ENCODE measurements at regions of chr5 and their contacts with region 1.

Region 1: DNA sequence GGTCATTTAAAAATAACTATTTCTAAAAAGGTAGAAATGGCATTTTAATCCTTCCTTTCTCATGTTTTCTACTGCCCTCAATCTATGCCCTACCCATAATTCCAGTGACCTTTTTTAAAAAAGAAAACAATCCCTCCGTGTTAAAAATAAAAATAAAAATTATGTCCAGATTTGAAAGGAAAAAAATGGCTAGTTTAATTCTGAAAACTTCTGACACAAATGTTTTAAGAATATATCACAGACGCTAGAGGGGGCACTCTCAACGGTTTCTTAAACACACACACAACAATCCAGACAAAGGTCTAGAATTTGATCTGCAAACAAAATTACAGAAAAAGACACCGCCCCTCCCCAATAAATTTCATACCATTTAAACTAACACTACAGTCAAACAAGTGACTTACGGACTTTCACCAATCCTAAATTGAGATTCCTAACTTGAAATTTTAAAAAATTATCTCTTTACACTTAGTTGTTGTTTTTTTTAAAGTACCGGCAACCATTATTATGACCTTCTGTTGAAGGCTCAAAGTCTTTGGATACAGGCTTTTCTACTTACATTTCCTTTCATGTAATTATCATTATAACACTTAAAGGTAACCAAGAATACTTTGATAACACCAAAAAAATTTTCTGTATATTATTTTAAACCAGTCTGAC is 38.2 kb downstream of the CLINT1 start:
- DNase-seq: no peak
- H3K4me3 Mint-ChIP-seq: no peak overlapping the region
- H3K27ac Mint-ChIP-seq: no peak overlapping the region
- H3K4me1 Mint-ChIP-seq: peaks cover 25% of the 10 kb centered on the region
- H3K27me3 Mint-ChIP-seq: no peaks in the 10 kb centered on the region

Region 2: GRCh38 chr5:157917899-157918809 is 97.4 kb after region 1 on chr5:
- CTCF ChIA-PET with region 1: interaction called, 38 read pairs
- POLR2A ChIA-PET with region 1: no interaction called
- intact Hi-C with region 1: loop called (anchors 1 kb)
- DNase-seq: peak; percentile 83
- H3K4me3 Mint-ChIP-seq: no peak overlapping the region
- H3K27ac Mint-ChIP-seq: no peak overlapping the region
- H3K4me1 Mint-ChIP-seq: peaks cover 22% of the 10 kb centered on the region
- H3K27me3 Mint-ChIP-seq: no peaks in the 10 kb centered on the region

Region 3: DNA sequence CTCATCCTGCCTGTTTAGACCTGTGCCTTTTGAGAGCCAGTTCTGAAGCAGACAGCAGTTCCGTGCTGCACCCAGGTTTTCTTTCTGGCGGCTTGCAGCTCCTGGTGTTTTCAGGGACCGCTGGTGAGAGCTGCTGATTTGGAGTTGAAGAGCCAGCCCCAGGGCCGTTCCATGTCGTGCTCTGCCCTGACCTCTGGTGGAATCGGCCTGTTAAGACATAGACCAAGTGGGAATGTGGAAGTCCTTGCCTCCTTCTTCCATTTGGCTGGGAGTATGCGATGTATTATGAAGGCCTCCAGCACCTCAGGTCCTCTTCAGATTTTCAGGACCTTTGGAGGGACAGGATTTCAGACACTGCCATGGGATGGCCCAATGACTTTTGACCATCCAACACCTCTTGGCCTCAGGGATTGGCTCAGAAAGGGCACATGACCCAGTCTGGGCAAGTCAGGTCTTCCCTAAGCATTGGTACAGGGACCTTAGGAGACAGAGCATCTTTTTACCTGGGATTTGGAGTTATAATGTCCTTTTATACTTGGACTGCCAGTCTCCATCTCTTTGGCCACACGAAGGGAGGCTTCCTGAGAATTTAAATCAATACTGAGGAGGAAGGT is 174.3 kb after region 1 on chr5:
- CTCF ChIA-PET with region 1: interaction called, 31 read pairs
- POLR2A ChIA-PET with region 1: no interaction called
- intact Hi-C with region 1: loop called (anchors 1 kb)
- DNase-seq: peak; percentile 66
- H3K4me3 Mint-ChIP-seq: no peak overlapping the region
- H3K27ac Mint-ChIP-seq: no peak overlapping the region
- H3K4me1 Mint-ChIP-seq: peaks cover 13% of the 10 kb centered on the region
- H3K27me3 Mint-ChIP-seq: peaks cover 30% of the 10 kb centered on the region

Measured in activated CD4-positive, alpha-beta memory T cell treated with anti-CD3 and anti-CD28 coated beads for 36 hours (primary cell).